Activated T-helper 1 cell treated with anti-CD3 and anti-CD28 coated beads, Interleukin-12 subunit alpha, Interleukin-12 subunit beta, Interleukin-2, Interleukin-4 antibody, amounts not matched to agents 30 ng/mL and 10 ng/mL and 1 ng/mL, durations not matched to agents 14 hours and 24 hours and 36 hours (primary cell): ENCODE measurements at regions of chr10 and their contacts with region 1.

Region 1: GRCh38 chr10:62816331-62817120 is at the start of gene EGR2:
- DNase-seq: peak; percentile 94
- H3K4me3 Mint-ChIP-seq: peak within 1 kb of the TSS; percentile 98
- H3K27ac Mint-ChIP-seq: peak within 1 kb of the TSS; percentile 98
- H3K4me1 Mint-ChIP-seq: peaks cover 58% of the 10 kb centered on the region
- H3K27me3 Mint-ChIP-seq: peaks cover 38% of the 10 kb centered on the region
- total RNA-seq, gene EGR2: 268 and 282 TPM in 2 replicates

Region 2: DNA sequence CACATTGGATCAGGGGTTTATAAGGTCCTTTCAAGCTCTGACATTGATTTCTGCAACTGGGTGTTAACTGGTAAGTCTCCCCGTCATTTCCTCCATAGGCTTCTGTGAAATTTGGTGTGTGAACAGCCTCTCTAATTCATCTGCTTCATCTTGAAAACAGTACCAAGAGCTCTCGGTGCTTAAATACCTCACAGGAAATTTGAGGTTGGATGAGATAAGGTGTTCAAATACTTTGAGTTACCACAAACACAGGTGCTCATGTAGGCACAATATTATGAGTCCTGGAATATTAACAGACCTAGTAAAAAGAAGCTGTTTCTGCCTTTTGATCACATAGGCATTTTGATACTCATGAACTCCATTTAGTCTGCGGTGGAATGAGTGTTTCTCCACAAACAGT is 633.1 kb before region 1 on chr10:
- intact Hi-C with region 1: loop called (anchors 1 kb)
- DNase-seq: peak; percentile 61
- H3K4me3 Mint-ChIP-seq: peak overlapping the region; percentile 5
- H3K27ac Mint-ChIP-seq: peak overlapping the region; percentile 92
- H3K4me1 Mint-ChIP-seq: peaks cover 88% of the 10 kb centered on the region
- H3K27me3 Mint-ChIP-seq: no peaks in the 10 kb centered on the region

Region 3: DNA sequence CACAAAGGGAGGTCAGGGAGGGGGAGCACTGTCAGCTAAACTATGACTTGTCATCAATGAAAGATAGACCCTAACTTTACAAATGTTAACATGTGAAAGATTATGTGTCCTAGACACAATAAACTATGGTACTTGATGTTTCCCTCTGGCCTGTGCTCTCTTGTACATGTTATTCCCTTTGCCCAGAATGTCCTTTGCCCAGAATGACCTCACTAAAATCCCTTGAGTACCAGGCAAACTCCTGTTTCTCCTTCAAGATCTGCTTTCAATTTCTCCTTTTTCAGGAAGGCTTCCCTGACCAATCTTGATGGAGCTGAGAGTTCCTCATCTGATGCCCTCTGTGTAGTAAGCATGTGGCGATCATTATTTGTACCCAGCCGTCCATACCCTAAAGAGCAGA is 299.3 kb before region 1 on chr10:
- intact Hi-C with region 1: no loop called
- DNase-seq: no peak
- H3K4me3 Mint-ChIP-seq: no peak overlapping the region
- H3K27ac Mint-ChIP-seq: no peak overlapping the region
- H3K4me1 Mint-ChIP-seq: no peaks in the 10 kb centered on the region
- H3K27me3 Mint-ChIP-seq: peaks cover 22% of the 10 kb centered on the region

Region 4: DNA sequence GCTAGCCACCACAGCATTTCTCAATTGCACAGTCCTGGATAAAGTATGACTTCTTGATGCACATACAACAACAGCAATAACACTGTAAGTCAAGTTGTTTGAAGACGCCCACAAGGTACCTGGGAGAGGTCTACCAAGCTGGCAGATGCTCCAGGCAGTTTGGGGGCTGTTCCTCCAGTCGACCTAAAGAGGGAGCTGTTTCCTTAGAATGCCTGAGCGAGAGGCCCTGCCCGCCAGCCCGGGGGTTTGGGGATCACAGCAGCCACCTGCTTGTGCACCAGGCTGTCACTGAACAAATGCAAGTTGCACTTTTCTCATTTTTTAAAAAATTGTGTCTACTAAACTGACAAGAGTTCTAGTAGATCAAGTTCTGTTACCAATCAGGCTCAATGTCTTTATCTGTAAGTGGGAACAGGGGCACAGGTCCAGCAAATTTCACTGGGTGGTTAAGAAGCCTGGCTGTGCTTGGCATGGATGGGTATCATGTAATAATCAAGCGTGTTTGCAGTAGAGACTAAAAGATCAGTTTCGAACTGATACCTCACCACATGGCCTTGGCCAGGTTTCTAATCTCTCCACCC is 205.8 kb before region 1 on chr10:
- intact Hi-C with region 1: loop called (anchors 1 kb)
- DNase-seq: peak; percentile 65
- H3K4me3 Mint-ChIP-seq: no peak overlapping the region
- H3K27ac Mint-ChIP-seq: peak overlapping the region; percentile 11
- H3K4me1 Mint-ChIP-seq: peaks cover 59% of the 10 kb centered on the region
- H3K27me3 Mint-ChIP-seq: peaks cover 9% of the 10 kb centered on the region

Region 5: GRCh38 chr10:62732841-62733653 is 83.5 kb before region 1 on chr10:
- intact Hi-C with region 1: loop called (anchors 1 kb)
- DNase-seq: peak; percentile 64
- H3K4me3 Mint-ChIP-seq: peak overlapping the region; percentile 72
- H3K27ac Mint-ChIP-seq: no peak overlapping the region
- H3K4me1 Mint-ChIP-seq: peaks cover 23% of the 10 kb centered on the region
- H3K27me3 Mint-ChIP-seq: no peaks in the 10 kb centered on the region

Region 6: GRCh38 chr10:62916141-62916603 is 99.6 kb after region 1 on chr10:
- intact Hi-C with region 1: no loop called
- DNase-seq: no peak
- H3K4me3 Mint-ChIP-seq: no peak overlapping the region
- H3K27ac Mint-ChIP-seq: no peak overlapping the region
- H3K4me1 Mint-ChIP-seq: peaks cover 10% of the 10 kb centered on the region
- H3K27me3 Mint-ChIP-seq: peaks cover 4% of the 10 kb centered on the region

Region 7: DNA sequence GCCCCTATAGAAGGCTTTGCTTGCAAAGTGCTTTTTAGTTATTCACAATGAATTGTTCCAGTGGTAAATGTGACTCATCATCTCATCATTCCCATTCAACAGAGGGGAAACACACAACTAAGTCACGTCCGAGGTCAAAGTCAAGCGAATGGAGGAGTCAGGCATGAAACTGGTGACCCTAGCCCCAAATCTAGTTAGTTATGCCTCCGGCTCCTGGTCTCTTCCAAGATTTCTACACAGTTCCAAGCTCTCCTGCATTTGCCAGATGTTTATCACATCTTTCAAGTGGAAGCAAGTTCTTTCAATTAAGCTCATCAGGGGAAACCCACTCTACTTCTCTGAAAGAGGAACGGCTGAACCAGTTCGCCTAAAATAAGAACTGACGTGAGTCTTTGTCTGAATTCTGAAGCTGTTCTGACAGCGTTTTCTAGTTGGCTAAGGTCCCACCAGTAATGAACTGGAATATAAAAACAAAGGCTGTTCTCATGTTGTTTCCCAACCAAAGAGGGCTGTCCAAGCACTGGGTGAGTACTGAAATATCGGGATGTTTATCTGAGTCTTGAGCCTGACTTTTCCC is 175.7 kb after region 1 on chr10:
- intact Hi-C with region 1: loop called (anchors 1 kb)
- DNase-seq: no peak
- H3K4me3 Mint-ChIP-seq: peak overlapping the region; percentile 58
- H3K27ac Mint-ChIP-seq: peak overlapping the region; percentile 94
- H3K4me1 Mint-ChIP-seq: peaks cover 52% of the 10 kb centered on the region
- H3K27me3 Mint-ChIP-seq: peaks cover 4% of the 10 kb centered on the region

Region 8: DNA sequence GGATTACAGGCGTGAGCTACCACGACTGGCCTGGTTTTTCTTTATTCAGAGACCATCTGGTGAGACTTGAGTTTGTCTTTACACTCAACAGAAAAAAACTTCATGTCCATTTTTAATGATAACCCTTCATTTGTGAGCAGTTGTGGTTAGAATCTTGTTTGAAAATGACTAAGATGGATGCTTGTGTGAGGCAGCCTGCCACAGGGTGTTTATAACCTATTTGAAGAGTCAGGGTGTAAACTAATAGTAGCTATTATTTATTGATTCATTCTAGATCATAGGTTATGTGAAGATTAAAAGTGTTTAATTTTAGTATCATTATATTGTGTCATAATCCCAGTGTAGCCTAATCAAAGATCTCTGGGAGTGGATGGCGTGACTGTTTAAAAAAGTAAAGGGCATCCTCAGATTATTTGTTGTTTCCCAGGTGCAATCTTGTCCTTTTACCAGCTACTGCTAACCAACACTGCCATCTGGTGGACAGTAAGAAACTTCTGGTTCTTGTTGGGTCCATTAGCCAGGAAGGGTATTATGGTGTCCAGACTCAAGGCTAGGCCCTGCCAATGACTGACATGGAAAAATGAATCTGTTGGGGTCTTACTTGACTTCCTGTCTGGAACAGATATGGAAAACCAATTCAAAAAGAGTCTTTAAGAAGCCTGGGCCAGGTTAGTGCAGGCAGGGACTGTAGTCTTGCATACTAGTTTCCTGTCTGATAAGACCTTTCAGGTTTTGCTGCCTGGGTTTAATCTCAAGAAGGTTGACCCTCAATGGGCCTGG is 341.5 kb after region 1 on chr10:
- intact Hi-C with region 1: loop called (anchors 1 kb)
- DNase-seq: peak; percentile 29
- H3K4me3 Mint-ChIP-seq: no peak overlapping the region
- H3K27ac Mint-ChIP-seq: no peak overlapping the region
- H3K4me1 Mint-ChIP-seq: peaks cover 24% of the 10 kb centered on the region
- H3K27me3 Mint-ChIP-seq: no peaks in the 10 kb centered on the region